ENCODE measurements at regions of chr15 and their contacts with region 1.

Region 1: DNA sequence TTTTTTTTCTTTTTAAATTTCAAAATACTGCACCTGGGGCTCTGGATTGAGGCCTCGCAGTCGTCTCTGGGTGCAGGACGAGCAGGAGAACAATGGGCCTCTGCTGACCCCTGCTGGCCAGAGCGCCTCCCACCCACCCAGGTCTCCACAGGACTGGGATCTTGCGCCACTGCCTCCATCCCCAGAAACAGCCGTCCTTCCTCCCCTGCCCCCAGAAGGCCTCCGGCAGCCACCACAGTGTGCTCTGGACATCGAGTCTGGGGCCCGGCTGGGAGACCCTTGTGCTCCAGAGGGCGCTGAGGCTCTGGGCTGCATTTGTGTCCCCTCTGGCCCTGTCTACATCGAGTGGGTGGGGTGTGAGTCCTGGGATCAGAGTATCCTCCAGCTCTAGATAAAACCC is 6.6 kb upstream of the ACSBG1 start:
- DNase-seq: peak; percentile 69 to 81 (median 76)
- H3K4me3 ChIP-seq: no peak overlapping the region
- H3K27ac ChIP-seq: no peak overlapping the region
- H3K4me1 ChIP-seq: peaks cover 0 to 7% (median 0%) of the 10 kb centered on the region in 4 experiments
- H3K27me3 ChIP-seq: peaks cover 0 to 4% (median 0%) of the 10 kb centered on the region in 5 experiments

Region 2: GRCh38 chr15:78131295-78132061 is 109.5 kb before region 1 on chr15 and contains the start of gene CIB2:
- CTCF ChIA-PET with region 1: interaction called, 10 read pairs
- POLR2A ChIA-PET with region 1: no interaction called
- DNase-seq: peak; percentile 78 to 84 (median 81)
- H3K4me3 ChIP-seq: peak within 1 kb of the TSS; percentile 48 to 85 (median 76)
- H3K27ac ChIP-seq: peak within 1 kb of the TSS in 1 of 2 experiments; percentile 70
- H3K4me1 ChIP-seq: peaks cover 4 to 24% (median 18%) of the 10 kb centered on the region in 4 experiments
- H3K27me3 ChIP-seq: peaks cover 0 to 1% (median 0%) of the 10 kb centered on the region in 5 experiments

Region 3: DNA sequence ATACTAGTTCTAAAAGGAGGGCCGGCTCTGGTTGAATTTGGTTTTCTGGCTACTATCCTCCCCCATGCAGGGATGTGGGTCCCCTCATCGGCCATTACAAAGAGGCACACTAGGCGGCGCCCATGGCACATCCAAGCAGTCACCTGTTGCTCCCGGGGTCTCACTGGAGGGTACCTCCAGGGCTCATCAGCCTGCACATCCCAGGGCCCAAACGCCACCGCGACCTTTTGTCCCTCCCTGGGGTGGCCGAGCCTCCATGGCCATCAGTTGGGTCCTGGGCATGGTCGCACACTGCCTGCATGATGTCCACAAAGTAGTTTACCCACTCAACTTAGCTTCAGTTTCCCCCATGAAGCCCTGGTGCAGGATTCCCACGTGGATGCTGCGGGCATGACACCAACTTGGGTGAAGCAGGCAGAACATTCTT is 63.5 kb before region 1 on chr15:
- CTCF ChIA-PET with region 1: interaction called, 39 read pairs
- POLR2A ChIA-PET with region 1: interaction called, 4 read pairs
- DNase-seq: peak in 2 of 3 donors; percentile 41 to 50
- H3K4me3 ChIP-seq: no peak overlapping the region
- H3K27ac ChIP-seq: no peak overlapping the region
- H3K4me1 ChIP-seq: peaks cover 11 to 33% (median 28%) of the 10 kb centered on the region in 4 experiments
- H3K27me3 ChIP-seq: no peaks in the 10 kb centered on the region

Region 4: GRCh38 chr15:78195735-78196201 is 45.2 kb before region 1 on chr15:
- CTCF ChIA-PET with region 1: interaction called, 17 read pairs
- POLR2A ChIA-PET with region 1: no interaction called
- DNase-seq: peak; percentile 40 to 58 (median 55)
- H3K4me3 ChIP-seq: no peak overlapping the region
- H3K27ac ChIP-seq: no peak overlapping the region
- H3K4me1 ChIP-seq: no peaks in the 10 kb centered on the region
- H3K27me3 ChIP-seq: peaks cover 0 to 2% (median 0%) of the 10 kb centered on the region in 5 experiments

Region 5: DNA sequence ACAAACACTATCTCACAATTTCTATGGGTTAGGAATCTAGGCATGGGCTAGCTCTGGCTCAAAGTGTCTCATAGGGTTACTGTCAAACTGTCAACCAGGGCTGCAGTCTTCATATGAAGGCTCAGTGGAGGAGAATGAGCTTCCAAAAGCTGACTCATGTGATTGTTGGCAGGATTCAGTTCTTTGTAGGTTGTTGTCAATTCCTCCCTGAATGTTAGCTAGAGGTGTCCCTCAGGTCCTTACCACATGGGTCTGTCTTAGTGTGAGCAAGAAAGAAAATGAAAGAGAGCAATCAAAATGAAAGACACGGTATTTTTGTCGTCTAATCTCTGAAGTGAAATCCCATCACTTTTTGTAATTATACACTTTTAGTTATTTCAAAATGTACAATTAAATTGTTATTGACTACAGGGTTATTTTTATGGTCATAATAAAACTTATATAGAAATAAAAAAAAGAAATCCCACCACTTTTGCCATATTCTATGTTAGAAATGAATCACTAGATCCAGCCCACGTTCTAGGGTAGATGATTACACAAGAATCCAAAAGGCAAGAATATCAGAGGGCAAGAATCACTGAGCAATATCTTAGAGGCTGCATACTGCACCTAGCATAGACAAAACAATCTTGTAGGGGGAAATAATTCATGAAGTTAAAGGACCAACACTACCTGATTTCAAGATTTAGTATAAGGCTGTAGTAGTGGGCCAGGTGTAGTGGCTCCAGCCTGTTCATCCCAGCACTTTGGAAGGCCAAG is 15.0 kb before region 1 on chr15:
- CTCF ChIA-PET with region 1: interaction called, 17 read pairs
- POLR2A ChIA-PET with region 1: no interaction called
- DNase-seq: no peak
- H3K4me3 ChIP-seq: no peak overlapping the region
- H3K27ac ChIP-seq: no peak overlapping the region
- H3K4me1 ChIP-seq: no peaks in the 10 kb centered on the region
- H3K27me3 ChIP-seq: no peaks in the 10 kb centered on the region

Measured in common myeloid progenitor, CD34-positive (primary cell).